A673 (cell line): ENCODE measurements at regions of chr11 and their contacts with region 1.

Region 1: GRCh38 chr11:126124231-126124661 is 61.6 kb upstream of the CDON start:
- DNase-seq: no peak
- H3K4me3 ChIP-seq: no peak overlapping the region
- H3K27ac ChIP-seq: peak overlapping the region; percentile 53
- H3K4me1 ChIP-seq: peaks cover 25% of the 10 kb centered on the region
- H3K27me3 ChIP-seq: no peaks in the 10 kb centered on the region
- CTCF ChIP-seq: no peak

Region 2: DNA sequence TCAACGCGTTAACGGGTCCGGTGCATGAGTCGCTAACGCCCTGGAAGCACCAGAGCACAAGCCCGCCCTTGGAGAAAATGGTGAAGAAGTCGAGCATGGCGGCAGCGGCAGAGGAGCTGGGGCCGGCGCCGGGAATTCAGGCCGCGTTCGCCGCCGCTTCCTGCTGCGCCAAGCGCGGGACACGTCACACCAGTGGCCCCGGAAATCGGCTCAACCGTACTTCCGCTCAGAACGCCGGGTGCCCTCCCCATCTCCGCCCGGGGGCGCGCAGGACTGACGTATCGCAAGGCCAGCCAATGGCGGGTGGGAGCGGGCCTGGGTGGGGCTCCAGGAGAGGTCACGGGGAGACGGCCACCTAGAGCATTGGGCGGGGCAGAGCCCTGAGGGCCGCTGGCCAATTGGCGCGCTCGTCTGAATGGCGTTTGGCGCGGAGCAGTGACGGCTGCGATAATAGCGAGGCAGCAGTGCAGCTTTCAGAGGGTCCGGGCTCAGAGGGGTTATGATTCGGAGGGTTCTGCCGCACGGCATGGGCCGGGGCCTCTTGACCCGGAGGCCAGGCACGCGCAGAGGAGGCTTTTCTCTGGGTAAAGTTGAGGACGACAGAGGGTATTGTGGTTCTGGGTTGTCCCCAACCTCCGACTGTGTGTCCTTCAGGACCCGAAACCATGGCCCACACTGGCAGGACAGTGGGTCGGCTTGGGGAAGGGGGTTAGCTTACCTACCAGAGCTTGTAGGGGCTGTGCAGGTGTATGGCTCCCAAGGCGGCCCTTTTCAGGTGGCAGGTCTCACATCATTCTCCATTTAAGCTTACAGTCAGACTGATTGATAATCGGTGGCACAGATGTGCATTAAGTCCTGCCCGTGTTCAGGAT is 144.7 kb after region 1 on chr11 and contains the starts of genes FOXRED1 and SRPRA:
- CTCF ChIA-PET with region 1: no interaction called
- POLR2A ChIA-PET with region 1: interaction called, 15 read pairs
- intact Hi-C with region 1: no loop called
- DNase-seq: peak; percentile 100
- H3K4me3 ChIP-seq: peak within 1 kb of the TSS; percentile 67
- H3K27ac ChIP-seq: peak within 1 kb of the TSS; percentile 82
- H3K4me1 ChIP-seq: peaks cover 11% of the 10 kb centered on the region
- H3K27me3 ChIP-seq: no peaks in the 10 kb centered on the region
- CTCF ChIP-seq: no peak
- total RNA-seq, gene FOXRED1: 72.6 and 76.1 TPM in 2 replicates
- total RNA-seq, gene SRPRA: 123 and 136 TPM in 2 replicates

Region 3: GRCh38 chr11:126303623-126304456 is 179.6 kb after region 1 on chr11 and contains the start of gene DCPS:
- CTCF ChIA-PET with region 1: no interaction called
- POLR2A ChIA-PET with region 1: no interaction called
- intact Hi-C with region 1: no loop called
- DNase-seq: peak; percentile 94
- H3K4me3 ChIP-seq: peak within 1 kb of the TSS; percentile 75
- H3K27ac ChIP-seq: peak within 1 kb of the TSS; percentile 95
- H3K4me1 ChIP-seq: peaks cover 4% of the 10 kb centered on the region
- H3K27me3 ChIP-seq: no peaks in the 10 kb centered on the region
- CTCF ChIP-seq: no peak
- total RNA-seq, gene DCPS: 31.2 and 38.4 TPM in 2 replicates